GM10248 (cell line): ENCODE measurements at regions of chr1 and their contacts with region 1.

Region 1: GRCh38 chr1:71650119-71650518 is 569.3 kb upstream of the ZRANB2 start:
- DNase-seq: no peak
- CTCF ChIP-seq: no peak

Region 2: GRCh38 chr1:71640116-71640515 is 10.0 kb before region 1 on chr1:
- CTCF ChIA-PET with region 1: interaction called, 10 read pairs
- POLR2A ChIA-PET with region 1: no interaction called
- DNase-seq: no peak
- CTCF ChIP-seq: no peak